K562 (cell line): ENCODE measurements at regions of chr10 and their contacts with region 1.

Region 1: GRCh38 chr10:125048101-125048864 is 106.4 kb downstream of the ZRANB1 start:
- DNase-seq: peak; percentile 78 to 90 (median 82)
- ATAC-seq: peak; percentile 88
- H3K4me3 ChIP-seq: no peak overlapping the region
- H3K27ac ChIP-seq: peak overlapping the region; percentile 20; the same call in 1 of the 3 replicates
- H3K4me1 ChIP-seq: peaks cover 41 to 60% of the 10 kb centered on the region in 2 experiments; a peak in 4 of 5 replicates
- H3K27me3 ChIP-seq: no peaks in the 10 kb centered on the region
- CTCF ChIP-seq: peak; percentile 86 to 93 (median 91)
- EP300 ChIP-seq: no peak
- POLR2A ChIP-seq: no peak
- RAD21 ChIP-seq: peak; percentile 73 to 86

Region 2: DNA sequence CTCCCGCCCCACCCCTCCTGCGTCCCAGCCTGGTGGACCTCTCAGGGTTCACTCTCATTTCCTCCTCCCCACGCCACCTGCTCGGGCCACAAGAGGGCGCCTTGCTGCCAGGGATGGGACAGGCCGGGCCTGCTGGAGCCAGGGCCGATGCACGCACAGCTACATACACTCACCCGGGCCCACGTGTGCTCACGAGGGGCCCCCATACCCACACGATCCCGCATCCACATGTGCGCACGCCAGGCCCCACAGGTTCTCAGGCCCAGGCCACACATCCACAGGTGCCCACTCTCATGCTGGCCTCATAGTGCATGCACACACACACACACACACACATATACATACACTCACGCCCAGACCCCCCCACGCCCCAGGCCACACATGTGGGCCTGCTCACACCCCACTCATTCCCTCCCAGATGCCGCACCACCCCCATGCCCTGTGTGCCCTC is 518.0 kb before region 1 on chr10:
- CTCF ChIA-PET with region 1: no interaction called
- POLR2A ChIA-PET with region 1: no interaction called
- in situ Hi-C with region 1: loop called (anchors 10 kb)
- intact Hi-C with region 1: no loop called
- DNase-seq: peak; percentile 82 to 86 (median 83)
- ATAC-seq: peak; percentile 96
- H3K4me3 ChIP-seq: no peak overlapping the region
- H3K27ac ChIP-seq: no peak overlapping the region
- H3K4me1 ChIP-seq: peaks cover 3 to 52% of the 10 kb centered on the region in 2 experiments; a peak in 4 of 5 replicates
- H3K27me3 ChIP-seq: no peaks in the 10 kb centered on the region
- CTCF ChIP-seq: peak; percentile 72 to 88 (median 83)
- EP300 ChIP-seq: no peak
- POLR2A ChIP-seq: no peak
- RAD21 ChIP-seq: peak; percentile 70 to 88

Region 3: DNA sequence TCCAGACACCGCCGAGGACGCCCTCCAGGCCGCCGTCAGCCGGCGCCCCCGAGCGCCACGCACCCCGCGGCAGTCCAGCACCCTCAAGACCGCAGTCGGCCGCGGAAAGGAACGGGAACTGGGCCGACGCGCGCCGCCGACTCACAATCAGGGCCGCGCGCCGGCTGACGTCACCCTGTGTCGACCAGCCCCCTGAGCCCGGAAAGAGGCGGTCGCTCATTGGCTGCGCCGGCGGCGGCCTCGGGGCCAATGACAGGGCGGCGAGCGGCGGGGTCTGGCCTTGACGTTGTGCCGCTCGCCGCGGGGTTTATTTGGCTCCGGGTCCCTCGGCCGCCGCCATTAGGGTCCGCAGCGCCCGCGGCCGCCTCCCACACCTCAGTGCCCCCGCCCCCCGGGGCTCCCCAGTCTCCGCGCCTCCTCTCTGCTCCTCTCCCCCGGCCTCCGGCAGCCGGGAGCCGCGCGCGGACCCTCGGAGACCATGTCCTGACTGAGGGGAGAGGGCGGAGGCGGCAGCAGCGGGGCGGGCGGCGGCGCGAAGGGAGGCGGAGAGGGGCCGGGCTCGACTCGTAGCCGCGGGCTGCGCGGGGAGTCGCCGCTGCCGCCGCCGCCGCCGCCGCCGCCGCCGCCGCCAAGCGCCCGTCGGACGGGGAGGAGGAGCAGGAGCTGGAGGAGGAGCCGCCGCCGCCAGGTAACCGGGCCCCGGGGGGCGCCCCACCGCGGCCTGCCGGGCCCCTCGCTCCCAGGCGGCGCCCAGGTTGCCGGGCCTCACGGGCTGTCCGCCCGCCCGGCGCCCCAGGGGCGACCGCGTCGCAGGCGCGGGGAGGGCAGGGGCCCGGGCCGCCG is 131.5 kb before region 1 on chr10:
- CTCF ChIA-PET with region 1: no interaction called
- POLR2A ChIA-PET with region 1: interaction called, 10 read pairs
- in situ Hi-C with region 1: loop called (anchors 10 kb)
- intact Hi-C with region 1: no loop called
- DNase-seq: peak; percentile 95 to 98 (median 96)
- ATAC-seq: peak; percentile 92
- H3K4me3 ChIP-seq: peak overlapping the region; percentile 53
- H3K27ac ChIP-seq: peak overlapping the region; percentile 84
- H3K4me1 ChIP-seq: peaks cover 14 to 31% of the 10 kb centered on the region in 2 experiments
- H3K27me3 ChIP-seq: no peaks in the 10 kb centered on the region
- CTCF ChIP-seq: no peak; a peak in 1 of 6 replicates
- EP300 ChIP-seq: no peak
- POLR2A ChIP-seq: peak; percentile 88
- RAD21 ChIP-seq: no peak

Region 4: GRCh38 chr10:124952123-124952522 is 96.2 kb before region 1 on chr10:
- CTCF ChIA-PET with region 1: no interaction called
- POLR2A ChIA-PET with region 1: interaction called, 24 read pairs
- in situ Hi-C with region 1: no loop called
- intact Hi-C with region 1: no loop called
- DNase-seq: peak in 3 of 4 experiments; percentile 1 to 2 (median 1)
- ATAC-seq: no peak
- H3K4me3 ChIP-seq: no peak overlapping the region
- H3K27ac ChIP-seq: no peak overlapping the region
- H3K4me1 ChIP-seq: peaks cover 0 to 6% of the 10 kb centered on the region in 2 experiments; a peak in 2 of 5 replicates
- H3K27me3 ChIP-seq: no peaks in the 10 kb centered on the region
- CTCF ChIP-seq: no peak
- EP300 ChIP-seq: no peak
- POLR2A ChIP-seq: 0 out of 2 replicates have a peak, but pooled peaks have one; percentile 26
- RAD21 ChIP-seq: no peak

Region 5: DNA sequence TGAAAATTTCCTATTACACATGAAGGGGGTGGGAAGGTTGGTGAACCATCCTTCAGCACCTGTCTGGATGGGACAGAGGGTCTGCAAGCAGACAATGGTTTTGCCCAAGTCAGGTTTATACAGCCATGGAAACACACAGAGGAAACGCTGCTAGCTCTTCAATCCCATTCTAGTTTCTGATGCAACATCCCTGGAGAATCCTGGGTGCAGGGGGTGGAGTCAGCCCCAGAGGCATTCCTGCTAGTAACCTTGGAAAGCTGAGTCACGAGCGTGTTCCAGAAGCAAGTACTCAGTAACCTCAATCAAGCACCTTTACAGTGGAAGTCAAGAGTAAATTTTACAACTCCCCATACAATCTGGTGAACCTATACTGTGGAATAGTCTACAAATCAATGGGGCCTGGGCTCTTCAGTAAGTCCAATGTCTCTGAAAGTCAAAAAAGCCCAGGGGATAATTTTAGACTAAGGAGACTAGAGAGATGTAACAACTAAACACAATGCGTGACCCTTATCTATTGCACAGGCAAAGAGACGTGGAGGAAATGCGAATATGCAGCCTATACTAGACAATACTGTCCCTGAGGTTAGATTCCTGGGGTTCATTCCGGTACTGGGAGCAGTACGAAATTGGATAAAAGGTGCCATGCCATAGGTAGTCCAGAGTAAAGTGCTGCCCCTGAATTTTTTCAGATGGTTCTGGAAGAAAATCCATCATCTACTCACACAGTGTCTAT is 11.0 kb before region 1 on chr10:
- CTCF ChIA-PET with region 1: no interaction called
- POLR2A ChIA-PET with region 1: no interaction called
- in situ Hi-C with region 1: no loop called
- intact Hi-C with region 1: no loop called
- DNase-seq: no peak
- ATAC-seq: no peak
- H3K4me3 ChIP-seq: no peak overlapping the region
- H3K27ac ChIP-seq: no peak overlapping the region
- H3K4me1 ChIP-seq: no peaks in the 10 kb centered on the region; a peak in 1 of 5 replicates
- H3K27me3 ChIP-seq: no peaks in the 10 kb centered on the region
- CTCF ChIP-seq: no peak
- EP300 ChIP-seq: no peak
- POLR2A ChIP-seq: no peak
- RAD21 ChIP-seq: no peak

Region 6: GRCh38 chr10:125629763-125630376 is 581.6 kb after region 1 on chr10:
- CTCF ChIA-PET with region 1: no interaction called
- POLR2A ChIA-PET with region 1: no interaction called
- in situ Hi-C with region 1: no loop called
- intact Hi-C with region 1: loop called (anchors 10 kb)
- DNase-seq: peak; percentile 38 to 50 (median 46)
- ATAC-seq: peak; percentile 95
- H3K4me3 ChIP-seq: no peak overlapping the region
- H3K27ac ChIP-seq: no peak overlapping the region
- H3K4me1 ChIP-seq: no peaks in the 10 kb centered on the region
- H3K27me3 ChIP-seq: peaks cover 13 to 46% of the 10 kb centered on the region in 2 experiments; a peak in 4 of 5 replicates
- CTCF ChIP-seq: peak; percentile 44 to 57 (median 54); a peak in 4 of 6 replicates
- EP300 ChIP-seq: no peak
- POLR2A ChIP-seq: no peak
- RAD21 ChIP-seq: peak; percentile 55 to 78